ENCODE measurements at regions of chr4 and their contacts with region 1.

Region 1: GRCh38 chr4:10180927-10181782 is 64.6 kb upstream of the WDR1 start:
- DNase-seq: no peak

Region 2: DNA sequence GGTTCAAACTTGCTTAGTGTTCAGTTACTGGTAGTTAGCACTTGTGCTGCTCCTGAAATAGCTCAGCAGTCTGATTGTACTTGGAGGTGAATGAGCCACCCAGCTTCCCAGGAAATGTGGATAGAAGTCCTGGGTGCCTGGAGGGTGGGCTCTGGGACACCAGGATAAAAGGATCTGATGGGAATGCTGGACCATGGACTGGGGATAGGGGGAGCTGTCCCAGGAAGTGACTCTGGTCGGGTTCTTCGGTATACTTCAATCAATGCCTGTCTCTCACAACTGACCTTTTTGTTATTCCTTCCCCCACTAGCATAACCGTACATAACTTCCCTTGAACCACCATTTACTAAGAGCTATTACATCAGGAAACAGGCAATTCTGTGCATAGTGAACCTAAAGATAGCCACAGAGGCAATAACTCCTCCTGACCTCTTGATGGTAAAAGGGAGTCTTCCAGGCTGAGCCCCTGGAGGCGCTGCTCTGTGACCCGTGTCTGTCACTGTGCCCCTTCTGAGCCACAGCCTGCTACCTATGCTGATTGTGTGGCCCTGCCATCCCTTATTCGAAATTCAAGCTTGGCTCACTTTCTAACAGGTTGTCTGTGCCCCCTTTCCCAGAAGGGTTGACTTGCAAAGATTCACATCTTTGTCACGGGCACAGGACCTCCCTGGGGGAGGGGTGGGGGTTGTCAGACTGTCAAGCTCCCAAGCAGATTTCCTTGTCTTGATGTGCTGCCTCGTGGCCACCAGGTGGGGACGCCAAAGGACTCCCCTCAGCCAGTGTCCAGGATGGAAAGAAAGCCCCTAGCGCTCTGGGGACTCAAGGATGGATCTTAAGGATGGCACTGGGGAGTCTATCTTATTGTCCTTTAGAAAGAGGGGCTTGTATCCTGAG is 40.0 kb before region 1 on chr4:
- in situ Hi-C with region 1: no loop called
- DNase-seq: no peak

Region 3: GRCh38 chr4:10245751-10246150 is 64.6 kb after region 1 on chr4:
- in situ Hi-C with region 1: no loop called
- DNase-seq: no peak

Region 4: DNA sequence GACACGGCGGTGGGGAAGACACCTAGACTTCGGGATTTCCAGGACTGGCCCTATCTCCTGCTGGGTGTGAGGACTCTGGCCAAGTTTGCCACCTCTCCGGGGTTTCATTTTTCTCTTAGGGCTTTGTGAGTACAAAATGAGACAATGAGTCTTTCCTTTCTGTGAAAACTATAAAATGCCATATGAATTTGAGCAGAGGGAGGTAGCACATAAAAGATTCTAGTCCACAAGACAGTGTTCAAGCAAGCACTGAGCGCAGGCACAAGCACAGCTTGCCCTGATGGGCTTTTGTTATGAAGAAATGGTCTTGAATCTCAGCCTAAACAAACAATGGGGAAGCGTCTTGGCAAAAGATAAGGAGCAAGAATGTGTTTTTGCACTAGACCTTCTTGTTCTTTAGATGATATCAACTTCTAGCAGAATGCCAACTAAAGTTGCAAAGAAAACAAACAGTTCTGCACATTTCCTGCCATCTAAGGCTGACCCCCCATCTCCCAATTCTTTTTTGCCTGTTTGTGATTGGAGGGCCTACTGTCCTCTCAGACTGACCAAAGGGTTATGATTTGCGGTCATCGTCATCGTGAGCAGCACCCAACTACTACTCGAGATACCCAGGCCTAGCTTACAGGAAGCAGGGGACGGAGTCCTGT is 349.1 kb after region 1 on chr4:
- in situ Hi-C with region 1: loop called (anchors 25 kb)
- DNase-seq: no peak